ENCODE measurements at regions of chr15 and their contacts with region 1.

Region 1: DNA sequence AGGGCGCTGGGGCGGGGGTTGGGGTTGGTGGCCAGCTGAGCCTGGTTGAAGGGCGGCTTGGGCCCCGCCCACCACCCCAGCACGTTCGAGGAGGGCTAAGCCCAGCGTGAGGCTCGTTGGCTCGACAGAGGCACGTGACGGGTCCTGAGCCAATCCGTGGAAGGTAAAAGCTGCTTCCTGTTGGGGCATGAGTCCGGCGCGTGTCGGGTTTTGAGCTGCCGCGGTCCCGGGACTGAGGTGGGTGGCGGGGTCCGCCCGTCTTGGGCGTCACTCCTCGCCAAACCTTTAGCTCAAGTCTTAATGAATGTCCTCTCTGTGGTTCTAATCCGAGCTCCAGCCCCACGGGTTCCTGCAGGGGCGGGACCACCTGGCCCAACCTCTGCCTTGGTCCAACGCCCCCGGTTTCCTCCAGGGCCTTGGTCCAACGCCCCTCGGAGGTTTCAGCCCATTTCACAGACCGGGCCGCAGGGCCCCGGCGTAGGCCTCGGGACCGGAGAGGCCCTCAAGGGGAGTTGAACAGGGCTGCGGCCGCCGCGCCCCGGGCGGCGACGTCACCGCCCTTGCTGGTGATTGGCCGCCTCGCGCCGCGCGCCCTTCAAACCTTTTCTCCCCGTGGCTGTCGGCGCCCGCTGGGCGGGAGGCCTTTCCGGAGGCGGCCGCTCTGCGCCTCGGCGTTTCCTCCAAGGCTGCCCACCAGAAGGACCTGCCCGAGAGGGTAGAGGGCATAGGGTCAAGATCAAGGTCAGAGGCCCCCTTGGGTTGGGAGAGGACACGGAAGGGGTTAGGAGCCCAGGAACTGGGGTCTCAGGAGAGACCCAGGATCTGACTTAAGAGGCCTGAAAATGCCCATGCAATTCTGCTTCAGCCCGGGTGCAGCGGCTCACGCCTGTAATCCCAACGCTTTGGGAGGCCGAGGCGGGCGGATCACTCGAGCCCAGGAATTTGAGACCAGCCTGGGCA is at the start of gene RCCD1:
- DNase-seq: peak; percentile 95
- H3K4me3 ChIP-seq: peak within 1 kb of the TSS; percentile 59 to 76
- H3K27ac ChIP-seq: peak within 1 kb of the TSS; percentile 69 to 85
- H3K4me1 ChIP-seq: peaks cover 10% of the 10 kb centered on the region
- H3K27me3 ChIP-seq: no peaks in the 10 kb centered on the region
- CTCF ChIP-seq: no peak
- POLR2A ChIP-seq: no peak
- total RNA-seq, gene RCCD1: 9.1 to 13.0 TPM

Region 2: GRCh38 chr15:90716976-90717821 is 237.8 kb before region 1 on chr15 and contains the start of gene BLM:
- intact Hi-C with region 1: no loop called
- DNase-seq: peak; percentile 96
- H3K4me3 ChIP-seq: peak within 1 kb of the TSS; percentile 49 to 57
- H3K27ac ChIP-seq: peak within 1 kb of the TSS; percentile 82 to 90
- H3K4me1 ChIP-seq: no peaks in the 10 kb centered on the region
- H3K27me3 ChIP-seq: no peaks in the 10 kb centered on the region
- CTCF ChIP-seq: peak in 3 of 4 experiments; percentile 13 to 62 (median 55)
- POLR2A ChIP-seq: peak; percentile 47
- total RNA-seq, gene BLM: 1.4 to 4.9 TPM

Region 3: GRCh38 chr15:90862964-90863778 is 91.8 kb before region 1 on chr15:
- intact Hi-C with region 1: no loop called
- DNase-seq: no peak
- H3K4me3 ChIP-seq: no peak overlapping the region
- H3K27ac ChIP-seq: peak overlapping the region in 1 of 2 donors; percentile 48
- H3K4me1 ChIP-seq: peaks cover 5% of the 10 kb centered on the region
- H3K27me3 ChIP-seq: no peaks in the 10 kb centered on the region
- CTCF ChIP-seq: no peak
- POLR2A ChIP-seq: no peak

Region 4: GRCh38 chr15:90994417-90995311 is 39.7 kb after region 1 on chr15 and contains the start of gene PRC1:
- intact Hi-C with region 1: loop called (anchors 5 kb)
- DNase-seq: peak; percentile 99
- H3K4me3 ChIP-seq: peak within 1 kb of the TSS; percentile 87 to 91
- H3K27ac ChIP-seq: peak within 1 kb of the TSS; percentile 87 to 93
- H3K4me1 ChIP-seq: no peaks in the 10 kb centered on the region
- H3K27me3 ChIP-seq: no peaks in the 10 kb centered on the region
- CTCF ChIP-seq: no peak
- POLR2A ChIP-seq: no peak
- total RNA-seq, gene PRC1: 13.5 to 37.0 TPM

Region 5: GRCh38 chr15:91022075-91022835 is 67.3 kb after region 1 on chr15 and contains the start of gene VPS33B:
- intact Hi-C with region 1: loop called (anchors 10 kb)
- DNase-seq: peak; percentile 83
- H3K4me3 ChIP-seq: peak within 1 kb of the TSS; percentile 75 to 94
- H3K27ac ChIP-seq: peak within 1 kb of the TSS; percentile 55
- H3K4me1 ChIP-seq: peaks cover 9% of the 10 kb centered on the region
- H3K27me3 ChIP-seq: no peaks in the 10 kb centered on the region
- CTCF ChIP-seq: no peak
- POLR2A ChIP-seq: no peak
- total RNA-seq, gene VPS33B: 9.4 to 18.3 TPM

Region 6: GRCh38 chr15:91049378-91050127 is 94.6 kb after region 1 on chr15:
- intact Hi-C with region 1: loop called (anchors 5 kb)
- DNase-seq: peak; percentile 74
- H3K4me3 ChIP-seq: no peak overlapping the region
- H3K27ac ChIP-seq: no peak overlapping the region
- H3K4me1 ChIP-seq: no peaks in the 10 kb centered on the region
- H3K27me3 ChIP-seq: no peaks in the 10 kb centered on the region
- CTCF ChIP-seq: peak in 3 of 4 experiments; percentile 45 to 66 (median 62)
- POLR2A ChIP-seq: no peak

Region 7: DNA sequence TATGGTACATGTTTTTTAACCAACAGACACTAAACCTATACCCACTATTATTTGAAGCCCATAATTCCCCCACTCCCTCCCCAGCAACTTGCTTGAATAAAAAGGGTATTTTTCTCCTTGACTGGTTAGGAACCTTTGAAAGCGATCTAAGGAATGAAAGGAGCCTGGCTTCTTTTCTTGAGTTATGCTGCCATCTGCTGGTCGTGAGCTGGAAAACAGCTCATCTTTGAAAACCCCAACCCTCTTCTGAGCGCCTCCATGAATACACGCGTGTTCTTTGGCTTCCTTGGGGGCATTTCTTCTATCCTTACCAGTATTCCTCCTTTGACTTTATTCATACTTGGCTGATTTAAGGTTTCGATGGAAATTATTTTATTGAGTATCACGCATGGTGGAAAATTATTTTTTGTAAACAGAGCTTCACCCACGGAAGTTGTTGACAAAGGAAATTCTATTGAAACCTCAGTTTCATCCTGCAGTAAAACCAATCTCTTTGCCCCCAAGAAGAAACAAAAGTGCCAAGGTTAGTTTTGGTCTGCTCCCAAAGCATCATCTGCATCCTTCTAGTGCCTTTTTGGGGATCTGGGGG is 316.7 kb after region 1 on chr15:
- intact Hi-C with region 1: loop called (anchors 5 kb)
- DNase-seq: peak; percentile 49
- H3K4me3 ChIP-seq: peak overlapping the region in 1 of 2 donors; percentile 18
- H3K27ac ChIP-seq: no peak overlapping the region
- H3K4me1 ChIP-seq: no peaks in the 10 kb centered on the region
- H3K27me3 ChIP-seq: no peaks in the 10 kb centered on the region
- CTCF ChIP-seq: peak; percentile 53 to 86 (median 80)
- POLR2A ChIP-seq: no peak

Region 8: DNA sequence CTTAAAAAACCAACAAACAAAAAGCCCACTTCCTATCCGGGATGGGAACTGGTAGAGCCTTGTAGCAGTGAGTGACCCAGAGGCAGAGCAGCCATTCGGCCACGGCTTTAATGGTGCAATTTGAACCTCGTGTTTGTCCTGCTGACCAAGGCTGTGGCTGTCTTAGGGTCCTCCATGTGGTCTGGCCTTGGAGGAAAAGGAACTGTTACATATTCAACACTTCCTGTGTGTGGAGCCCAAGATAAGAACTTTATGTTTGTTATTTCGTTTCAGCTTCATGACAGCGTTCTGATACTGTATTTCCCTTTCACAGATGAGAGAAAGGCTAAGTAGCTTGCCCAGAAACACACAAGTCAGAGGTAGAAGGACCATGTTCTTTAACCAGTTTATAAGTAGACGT is 414.8 kb after region 1 on chr15:
- intact Hi-C with region 1: no loop called
- DNase-seq: no peak
- H3K4me3 ChIP-seq: no peak overlapping the region
- H3K27ac ChIP-seq: no peak overlapping the region
- H3K4me1 ChIP-seq: no peaks in the 10 kb centered on the region
- H3K27me3 ChIP-seq: no peaks in the 10 kb centered on the region
- CTCF ChIP-seq: no peak
- POLR2A ChIP-seq: no peak

Region 9: DNA sequence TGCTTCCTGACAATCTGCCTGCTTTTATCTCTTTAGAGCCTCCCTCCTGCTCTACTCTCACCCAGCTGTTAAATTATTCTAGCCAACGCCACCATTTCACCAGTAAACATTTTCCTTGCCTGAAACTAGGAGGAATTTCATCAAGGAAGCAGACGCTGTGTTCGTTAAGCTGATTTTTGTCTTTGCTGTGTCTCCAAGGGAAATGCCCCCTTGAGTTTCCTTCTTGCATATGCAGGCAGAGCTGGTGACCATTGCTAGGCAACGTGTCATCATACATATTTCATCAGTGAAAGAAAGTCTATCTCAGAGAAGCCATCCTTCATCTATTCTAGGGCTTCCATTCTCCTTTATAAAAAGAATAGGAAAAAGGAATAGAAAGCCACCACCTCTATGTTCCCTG is 1351.7 kb after region 1 on chr15:
- intact Hi-C with region 1: no loop called
- DNase-seq: no peak
- H3K4me3 ChIP-seq: no peak overlapping the region
- H3K27ac ChIP-seq: no peak overlapping the region
- H3K4me1 ChIP-seq: no peaks in the 10 kb centered on the region
- H3K27me3 ChIP-seq: no peaks in the 10 kb centered on the region
- CTCF ChIP-seq: no peak
- POLR2A ChIP-seq: no peak

Measured in prostate gland (tissue), 2 donors.